CD8-positive, alpha-beta memory T cell (primary cell): ENCODE measurements at regions of chr6 and their contacts with region 1.

Region 1: DNA sequence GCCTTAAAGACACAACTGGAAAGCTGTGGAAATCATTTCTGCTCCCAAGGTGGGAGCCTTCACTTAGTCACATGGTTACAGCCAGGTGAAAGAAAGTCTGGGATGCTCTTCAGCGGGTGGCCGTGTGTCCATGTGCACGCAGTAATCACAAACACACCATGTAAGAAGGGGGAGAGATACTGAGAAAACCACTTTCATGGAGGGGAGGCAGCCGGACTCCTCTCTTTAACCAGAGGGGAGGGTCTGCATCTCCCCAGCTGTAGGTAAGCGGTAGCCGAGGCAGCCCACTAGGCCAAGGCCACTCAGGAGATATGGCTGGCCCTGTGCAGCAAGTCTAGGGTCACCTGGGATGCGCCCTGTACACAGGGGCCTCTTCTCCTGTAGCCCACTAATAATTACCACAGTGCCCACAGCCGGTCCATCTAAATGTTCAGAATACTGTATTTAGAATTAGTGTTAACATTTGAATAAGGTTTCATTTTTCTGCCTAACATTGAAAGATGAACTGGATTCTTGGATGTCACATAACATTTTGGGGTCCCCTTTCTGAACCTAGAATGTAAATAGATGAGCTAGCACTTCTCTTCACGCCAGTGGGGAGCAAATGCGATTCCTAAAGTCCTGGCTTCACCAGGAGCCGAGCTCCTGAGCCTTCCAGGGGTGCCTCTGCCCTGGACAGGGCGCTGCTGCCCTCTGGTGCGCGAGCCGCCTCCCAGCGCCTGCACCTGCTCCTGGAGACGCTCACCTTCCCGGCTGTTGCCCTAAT is 15.9 kb downstream of the GPR31 start:
- DNase-seq: peak; percentile 21 to 66 (median 37)
- H3K4me3 ChIP-seq: no peak overlapping the region
- H3K4me3 Mint-ChIP-seq: peak overlapping the region in 3 of 7 donors; percentile 45 to 55 (median 51)
- H3K27ac ChIP-seq: no peak overlapping the region
- H3K27ac Mint-ChIP-seq: peak overlapping the region; percentile 35 to 93 (median 82)
- H3K4me1 ChIP-seq: no peaks in the 10 kb centered on the region
- H3K4me1 Mint-ChIP-seq: peaks cover 21 to 27% (median 23%) of the 10 kb centered on the region in 3 donors
- H3K27me3 ChIP-seq: no peaks in the 10 kb centered on the region
- H3K27me3 Mint-ChIP-seq: peaks cover 0 to 12% of the 10 kb centered on the region in 2 donors

Region 2: GRCh38 chr6:166775180-166776081 is 366.4 kb before region 1 on chr6:
- CTCF ChIA-PET with region 1: interaction called, 10 read pairs
- POLR2A ChIA-PET with region 1: no interaction called
- DNase-seq: peak; percentile 40 to 78 (median 59)
- H3K4me3 ChIP-seq: no peak overlapping the region
- H3K4me3 Mint-ChIP-seq: no peak overlapping the region
- H3K27ac ChIP-seq: no peak overlapping the region
- H3K27ac Mint-ChIP-seq: no peak overlapping the region
- H3K4me1 ChIP-seq: peaks cover 4% of the 10 kb centered on the region
- H3K4me1 Mint-ChIP-seq: peaks cover 0 to 6% (median 2%) of the 10 kb centered on the region in 3 donors
- H3K27me3 ChIP-seq: no peaks in the 10 kb centered on the region
- H3K27me3 Mint-ChIP-seq: peaks cover 4 to 47% of the 10 kb centered on the region in 2 donors

Region 3: DNA sequence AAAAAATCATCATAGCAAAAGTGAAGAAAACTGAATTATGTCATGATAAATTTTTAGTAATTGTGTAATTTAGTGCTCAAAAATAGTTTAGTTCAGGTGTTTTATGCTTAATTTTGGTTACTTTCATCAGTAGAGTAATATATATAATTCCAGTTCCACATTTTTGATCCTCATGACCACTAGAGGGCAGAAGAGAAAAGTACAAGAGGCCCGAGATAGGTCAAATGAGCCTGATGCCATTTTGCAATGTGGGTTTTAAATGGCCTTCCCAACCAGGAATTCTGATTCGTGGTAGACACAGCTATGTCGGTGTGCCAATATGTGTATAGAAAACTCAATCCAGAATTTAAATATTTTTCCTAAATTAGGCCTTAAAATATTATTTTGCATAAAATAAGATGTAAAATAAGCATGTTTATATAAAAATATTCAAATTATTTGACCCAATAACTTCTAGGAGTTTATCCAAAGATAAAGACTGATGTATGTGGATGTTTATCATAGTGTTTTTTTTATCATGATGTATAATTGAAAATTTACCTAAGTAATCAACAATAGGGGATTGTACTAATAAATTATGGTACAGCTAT is 355.1 kb before region 1 on chr6:
- CTCF ChIA-PET with region 1: interaction called, 10 read pairs
- POLR2A ChIA-PET with region 1: no interaction called
- DNase-seq: peak in 2 of 5 donors; percentile 43 to 49
- H3K4me3 ChIP-seq: no peak overlapping the region
- H3K4me3 Mint-ChIP-seq: no peak overlapping the region
- H3K27ac ChIP-seq: no peak overlapping the region
- H3K27ac Mint-ChIP-seq: peak overlapping the region in 1 of 8 donors; percentile 64
- H3K4me1 ChIP-seq: no peaks in the 10 kb centered on the region
- H3K4me1 Mint-ChIP-seq: no peaks in the 10 kb centered on the region
- H3K27me3 ChIP-seq: no peaks in the 10 kb centered on the region
- H3K27me3 Mint-ChIP-seq: peaks cover 0 to 6% of the 10 kb centered on the region in 2 donors

Region 4: GRCh38 chr6:167093922-167094432 is 47.9 kb before region 1 on chr6:
- CTCF ChIA-PET with region 1: interaction called, 11 read pairs
- POLR2A ChIA-PET with region 1: interaction called, 3 read pairs
- DNase-seq: peak; percentile 54 to 90 (median 81)
- H3K4me3 ChIP-seq: peak overlapping the region; percentile 46
- H3K4me3 Mint-ChIP-seq: peak overlapping the region; percentile 81 to 94 (median 87)
- H3K27ac ChIP-seq: peak overlapping the region; percentile 62
- H3K27ac Mint-ChIP-seq: peak overlapping the region; percentile 93 to 99 (median 97)
- H3K4me1 ChIP-seq: peaks cover 48% of the 10 kb centered on the region
- H3K4me1 Mint-ChIP-seq: peaks cover 56 to 66% (median 59%) of the 10 kb centered on the region in 3 donors
- H3K27me3 ChIP-seq: no peaks in the 10 kb centered on the region
- H3K27me3 Mint-ChIP-seq: peaks cover 0 to 2% of the 10 kb centered on the region in 2 donors

Region 5: GRCh38 chr6:167130008-167130677 is 11.7 kb before region 1 on chr6:
- CTCF ChIA-PET with region 1: interaction called, 11 read pairs
- POLR2A ChIA-PET with region 1: no interaction called
- DNase-seq: peak in 1 of 5 donors; percentile 57
- H3K4me3 ChIP-seq: no peak overlapping the region
- H3K4me3 Mint-ChIP-seq: peak overlapping the region; percentile 2 to 57 (median 37)
- H3K27ac ChIP-seq: no peak overlapping the region
- H3K27ac Mint-ChIP-seq: peak overlapping the region in 7 of 8 donors; percentile 37 to 93 (median 79)
- H3K4me1 ChIP-seq: peaks cover 12% of the 10 kb centered on the region
- H3K4me1 Mint-ChIP-seq: peaks cover 38 to 55% (median 46%) of the 10 kb centered on the region in 3 donors
- H3K27me3 ChIP-seq: no peaks in the 10 kb centered on the region
- H3K27me3 Mint-ChIP-seq: no peaks in the 10 kb centered on the region

Region 6: DNA sequence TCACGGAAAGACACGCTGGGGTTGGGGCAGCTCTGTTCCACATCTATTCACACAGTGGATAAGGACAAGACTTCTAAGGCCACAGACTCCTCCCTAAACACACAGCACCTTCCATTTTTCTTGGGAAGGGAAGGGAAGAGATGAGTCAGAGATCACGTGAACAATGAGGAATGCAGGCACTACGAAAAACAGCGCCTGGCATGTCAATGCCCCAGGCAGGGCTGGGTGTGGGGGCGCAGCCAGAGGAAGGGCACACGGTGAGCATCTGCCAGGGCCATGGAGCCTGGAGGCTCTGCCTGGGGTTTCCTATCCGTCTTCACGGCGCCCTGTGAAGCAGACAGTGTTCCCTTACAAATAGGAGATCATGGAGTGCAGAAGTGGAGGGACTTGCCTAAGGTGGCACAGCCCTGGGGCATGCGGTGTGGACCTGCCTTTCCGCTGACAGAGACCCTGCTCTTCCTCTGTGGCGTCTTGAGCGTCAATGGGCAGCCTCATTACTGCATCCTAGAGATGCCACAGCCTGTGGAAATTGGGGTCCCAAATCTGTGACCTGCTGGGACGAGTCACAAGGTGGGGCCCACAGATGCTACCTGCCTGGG is 164.6 kb after region 1 on chr6:
- CTCF ChIA-PET with region 1: no interaction called
- POLR2A ChIA-PET with region 1: no interaction called
- DNase-seq: no peak
- H3K4me3 ChIP-seq: no peak overlapping the region
- H3K4me3 Mint-ChIP-seq: no peak overlapping the region
- H3K27ac ChIP-seq: no peak overlapping the region
- H3K27ac Mint-ChIP-seq: no peak overlapping the region
- H3K4me1 ChIP-seq: no peaks in the 10 kb centered on the region
- H3K4me1 Mint-ChIP-seq: no peaks in the 10 kb centered on the region
- H3K27me3 ChIP-seq: no peaks in the 10 kb centered on the region
- H3K27me3 Mint-ChIP-seq: peaks cover 2 to 22% of the 10 kb centered on the region in 2 donors